Activated CD8-positive, alpha-beta T cell treated with anti-CD3 and anti-CD28 coated beads, Interleukin-2, amount 10 ng/mL, durations not matched to agents 7 days and 5 days (primary cell): ENCODE measurements at regions of chr14 and their contacts with region 1.

Region 1: GRCh38 chr14:69611201-69612011 is at the start of gene SUSD6:
- DNase-seq: peak; percentile 89
- ATAC-seq: peak; percentile 72
- H3K4me3 Mint-ChIP-seq: peak within 1 kb of the TSS; percentile 92
- H3K27ac Mint-ChIP-seq: peak within 1 kb of the TSS; percentile 99
- H3K4me1 Mint-ChIP-seq: peaks cover 50% of the 10 kb centered on the region
- H3K27me3 Mint-ChIP-seq: no peaks in the 10 kb centered on the region
- total RNA-seq, gene SUSD6: 40.0 to 43.1 TPM

Region 2: DNA sequence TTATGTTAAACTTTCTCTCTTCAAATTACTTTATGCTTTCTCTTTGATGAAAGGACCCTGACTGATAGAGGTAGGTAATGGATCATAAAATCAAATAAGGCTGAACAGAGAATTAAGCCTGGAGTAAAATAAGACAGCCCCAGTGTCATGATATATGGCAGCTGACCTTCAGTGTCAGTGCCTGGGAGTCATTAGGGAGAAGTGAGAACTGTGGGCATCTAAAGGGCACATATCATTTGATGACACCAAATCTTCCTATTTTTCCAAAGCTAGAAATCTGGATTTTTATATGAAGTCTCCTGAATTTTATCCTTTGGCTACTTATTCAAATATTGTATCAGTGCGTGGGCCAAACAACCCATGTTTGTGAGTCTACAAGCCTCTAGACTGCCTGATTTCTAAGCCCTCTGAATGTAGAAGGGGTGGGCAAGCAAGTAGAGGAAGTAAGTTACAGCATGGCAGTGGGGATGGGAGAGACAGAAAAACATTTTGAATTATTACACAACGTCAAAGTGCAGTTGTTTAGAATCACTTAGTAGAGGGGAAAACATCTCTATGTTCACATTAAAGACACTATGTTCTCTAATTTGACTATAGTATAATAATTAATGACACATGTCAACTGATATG is 203.0 kb before region 1 on chr14:
- CTCF ChIA-PET with region 1: no interaction called
- POLR2A ChIA-PET with region 1: no interaction called
- DNase-seq: no peak
- ATAC-seq: no peak
- H3K4me3 Mint-ChIP-seq: no peak overlapping the region
- H3K27ac Mint-ChIP-seq: no peak overlapping the region
- H3K4me1 Mint-ChIP-seq: peaks cover 3% of the 10 kb centered on the region
- H3K27me3 Mint-ChIP-seq: no peaks in the 10 kb centered on the region

Region 3: DNA sequence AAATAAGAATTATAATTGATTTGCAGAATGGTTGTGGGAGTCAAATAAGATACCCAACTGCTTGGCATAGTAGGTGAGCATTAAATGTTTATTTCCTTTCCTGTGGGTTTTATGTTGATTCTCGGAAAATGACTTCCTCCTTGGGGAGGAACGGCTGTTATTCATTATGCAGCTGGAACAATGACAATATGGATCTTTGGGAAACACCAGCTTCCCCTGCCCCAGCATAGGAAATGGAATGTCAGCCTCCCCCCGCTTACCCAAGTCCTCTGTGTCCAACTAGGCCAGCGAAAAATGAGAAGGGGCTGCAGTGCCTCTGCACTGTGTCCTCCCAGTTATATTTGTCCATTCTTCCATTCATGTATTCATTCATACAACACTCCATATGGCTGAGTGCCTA is 25.0 kb before region 1 on chr14:
- CTCF ChIA-PET with region 1: interaction called, 22 read pairs
- POLR2A ChIA-PET with region 1: no interaction called
- DNase-seq: no peak
- ATAC-seq: no peak
- H3K4me3 Mint-ChIP-seq: no peak overlapping the region
- H3K27ac Mint-ChIP-seq: no peak overlapping the region
- H3K4me1 Mint-ChIP-seq: peaks cover 8% of the 10 kb centered on the region
- H3K27me3 Mint-ChIP-seq: peaks cover 11% of the 10 kb centered on the region

Region 4: GRCh38 chr14:69625299-69626131 is 14.1 kb after region 1 on chr14:
- CTCF ChIA-PET with region 1: interaction called, 14 read pairs
- POLR2A ChIA-PET with region 1: interaction called, 32 read pairs
- DNase-seq: peak; percentile 92
- ATAC-seq: peak; percentile 93
- H3K4me3 Mint-ChIP-seq: peak overlapping the region; percentile 56
- H3K27ac Mint-ChIP-seq: peak overlapping the region; percentile 95
- H3K4me1 Mint-ChIP-seq: peaks cover 95% of the 10 kb centered on the region
- H3K27me3 Mint-ChIP-seq: no peaks in the 10 kb centered on the region

Region 5: DNA sequence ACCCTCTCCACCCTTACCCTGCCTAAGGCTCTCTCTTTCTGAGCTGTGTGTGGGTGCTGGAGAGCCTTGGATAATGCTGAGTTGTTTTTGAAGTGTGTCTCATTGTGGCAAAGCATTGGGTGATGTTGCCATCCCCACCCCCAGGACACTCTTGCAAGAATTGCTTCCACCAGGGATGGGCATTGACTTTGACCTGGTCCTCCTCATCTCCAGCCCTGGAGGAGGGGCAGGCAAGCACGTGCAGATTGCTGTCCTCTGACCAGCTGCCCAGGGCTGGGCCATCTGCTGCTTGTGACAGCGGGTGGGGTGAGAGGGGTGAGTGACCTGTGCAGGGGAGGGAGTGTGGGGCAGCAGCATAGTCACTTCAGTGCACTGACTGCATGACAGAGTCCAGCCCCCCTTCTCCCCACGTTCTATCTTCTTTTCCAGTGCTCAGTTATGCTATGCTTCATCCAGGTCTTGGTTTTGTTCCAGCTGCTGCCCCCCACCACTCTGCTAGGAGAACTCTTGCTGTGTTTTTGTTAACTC is 26.2 kb after region 1 on chr14:
- CTCF ChIA-PET with region 1: interaction called, 10 read pairs
- POLR2A ChIA-PET with region 1: interaction called, 3 read pairs
- DNase-seq: no peak
- ATAC-seq: peak; percentile 21
- H3K4me3 Mint-ChIP-seq: peak overlapping the region; percentile 43
- H3K27ac Mint-ChIP-seq: peak overlapping the region; percentile 80
- H3K4me1 Mint-ChIP-seq: peaks cover 79% of the 10 kb centered on the region
- H3K27me3 Mint-ChIP-seq: no peaks in the 10 kb centered on the region

Region 6: DNA sequence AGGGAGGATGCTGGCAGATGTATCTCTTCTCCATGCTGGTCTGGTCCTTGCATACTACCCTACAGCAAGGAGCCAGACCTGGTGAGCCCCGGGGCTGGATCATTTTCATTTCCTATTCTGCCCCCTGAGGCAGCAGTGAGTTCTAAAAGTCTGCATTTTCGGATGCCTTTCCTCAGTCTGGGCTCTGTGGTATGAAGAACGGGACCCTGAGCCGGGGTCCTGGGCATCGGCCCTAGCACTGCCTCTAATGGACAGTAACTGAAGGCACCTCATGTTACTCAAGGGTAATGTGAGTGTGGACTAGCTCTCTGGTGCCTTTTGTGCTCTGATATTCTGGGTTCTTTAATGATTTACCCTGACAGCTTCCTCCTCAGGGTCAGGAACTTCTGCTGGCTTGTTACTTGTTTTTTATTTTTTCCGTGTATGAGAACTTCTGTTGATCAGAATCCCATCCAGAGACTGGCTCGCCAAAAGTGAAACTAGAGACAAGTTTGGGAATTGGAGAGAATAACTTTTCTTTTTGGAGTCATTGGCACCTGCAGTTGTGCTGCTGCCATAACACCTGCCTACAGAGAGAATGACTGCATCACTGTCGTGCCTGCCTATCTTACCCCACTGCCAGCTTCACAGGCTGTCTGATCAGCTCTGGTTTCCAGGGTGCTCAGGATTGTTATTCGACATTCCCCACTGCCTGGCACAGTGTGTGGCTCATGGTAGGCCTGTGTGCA is 62.3 kb after region 1 on chr14:
- CTCF ChIA-PET with region 1: interaction called, 16 read pairs
- POLR2A ChIA-PET with region 1: interaction called, 10 read pairs
- DNase-seq: no peak
- ATAC-seq: peak; percentile 25
- H3K4me3 Mint-ChIP-seq: peak overlapping the region; percentile 24
- H3K27ac Mint-ChIP-seq: peak overlapping the region; percentile 85
- H3K4me1 Mint-ChIP-seq: peaks cover 80% of the 10 kb centered on the region
- H3K27me3 Mint-ChIP-seq: no peaks in the 10 kb centered on the region

Region 7: DNA sequence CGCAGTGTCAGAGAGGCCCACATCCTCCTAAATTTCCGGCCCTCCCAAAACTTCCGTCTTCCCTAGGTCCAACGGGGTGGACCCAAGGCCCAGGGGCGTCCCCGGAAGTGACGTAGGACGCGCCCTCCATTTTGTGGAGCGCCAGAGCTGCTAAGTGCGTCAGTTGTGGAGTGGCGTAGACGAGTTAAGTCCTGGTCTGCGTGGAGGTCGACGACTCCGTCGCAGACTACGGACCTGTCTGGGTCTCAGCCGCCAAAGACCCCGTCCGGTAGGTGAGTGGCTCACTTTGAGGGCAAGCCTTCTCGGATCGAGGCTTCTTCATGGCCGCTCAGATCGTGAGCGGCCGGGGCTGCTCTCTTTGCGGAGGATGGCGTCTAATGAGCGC is 155.6 kb after region 1 on chr14 and contains the start of gene SRSF5:
- CTCF ChIA-PET with region 1: interaction called, 4 read pairs
- POLR2A ChIA-PET with region 1: interaction called, 21 read pairs
- DNase-seq: peak; percentile 96
- ATAC-seq: peak; percentile 82
- H3K4me3 Mint-ChIP-seq: peak within 1 kb of the TSS; percentile 98
- H3K27ac Mint-ChIP-seq: peak within 1 kb of the TSS; percentile 100
- H3K4me1 Mint-ChIP-seq: peaks cover 60% of the 10 kb centered on the region
- H3K27me3 Mint-ChIP-seq: no peaks in the 10 kb centered on the region
- total RNA-seq, gene SRSF5: 283 to 301 TPM